Posterior cingulate gyrus (tissue), 11 donors: ENCODE measurements at regions of chr2 and their contacts with region 1.

Region 1: GRCh38 chr2:227515742-227516141 is 43.8 kb downstream of the AGFG1 start:
- DNase-seq: no peak

Region 2: DNA sequence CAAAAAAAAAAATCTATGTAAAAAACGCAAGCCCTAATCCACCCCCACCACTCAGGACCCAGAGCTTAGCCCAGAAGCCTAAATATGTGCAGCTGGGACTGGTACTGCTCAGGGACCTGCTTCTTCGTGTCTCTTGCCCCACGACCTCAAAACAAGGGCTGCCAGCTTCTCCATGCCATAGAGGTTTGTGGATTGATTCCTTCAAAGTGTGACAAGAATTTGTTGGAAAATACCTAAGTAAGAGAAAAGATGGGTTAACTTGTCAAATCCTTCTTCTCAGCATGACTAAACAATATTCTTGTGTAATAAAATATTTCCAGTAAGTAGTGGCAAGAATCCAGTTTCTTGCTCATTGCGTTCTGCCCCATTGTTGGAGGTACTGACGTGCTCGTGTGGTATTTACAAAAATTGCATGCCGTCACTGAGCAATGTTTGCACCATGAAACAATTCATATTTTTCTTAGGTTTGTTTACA is 127.2 kb before region 1 on chr2:
- intact Hi-C with region 1: no loop called
- DNase-seq: no peak

Region 3: DNA sequence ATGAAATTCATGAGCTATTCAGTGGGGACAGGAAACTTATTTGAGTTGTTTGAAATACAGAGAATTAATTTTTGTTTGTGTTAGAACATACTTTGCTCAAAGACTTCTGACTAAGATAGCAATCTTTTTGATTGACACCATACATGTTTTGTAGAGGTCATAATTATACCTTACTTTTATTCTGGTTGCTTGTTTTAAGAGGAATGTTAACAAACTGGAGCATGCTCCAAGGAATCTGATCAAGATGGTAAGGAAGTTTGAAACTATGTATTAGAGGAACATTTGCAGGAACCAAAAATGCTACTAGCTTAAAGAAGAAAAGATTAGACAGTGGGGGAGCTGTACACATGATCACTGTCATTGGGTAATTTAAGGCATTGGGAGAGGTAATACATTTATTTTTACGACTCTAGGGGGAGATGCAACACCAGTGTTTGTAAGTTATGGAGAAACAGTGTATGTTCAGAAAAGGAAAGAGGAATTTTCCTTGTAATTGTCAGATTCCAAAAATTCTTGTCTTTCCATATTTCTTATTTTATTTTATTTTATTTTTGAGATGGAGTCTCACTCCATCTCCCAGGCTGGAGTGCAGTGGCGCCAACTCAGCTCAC is 35.8 kb before region 1 on chr2:
- intact Hi-C with region 1: loop called (anchors 5 kb)
- DNase-seq: no peak